HAP-1 (cell line): ENCODE measurements at regions of chr5 and their contacts with region 1.

Region 1: GRCh38 chr5:98905857-98906690 is 22.7 kb downstream of the CHD1 start:
- DNase-seq: peak in 1 of 2 experiments; percentile 47
- H3K4me3 ChIP-seq: no peak overlapping the region
- H3K4me1 ChIP-seq: peaks cover 23% of the 10 kb centered on the region
- H3K27me3 ChIP-seq: no peaks in the 10 kb centered on the region

Region 2: DNA sequence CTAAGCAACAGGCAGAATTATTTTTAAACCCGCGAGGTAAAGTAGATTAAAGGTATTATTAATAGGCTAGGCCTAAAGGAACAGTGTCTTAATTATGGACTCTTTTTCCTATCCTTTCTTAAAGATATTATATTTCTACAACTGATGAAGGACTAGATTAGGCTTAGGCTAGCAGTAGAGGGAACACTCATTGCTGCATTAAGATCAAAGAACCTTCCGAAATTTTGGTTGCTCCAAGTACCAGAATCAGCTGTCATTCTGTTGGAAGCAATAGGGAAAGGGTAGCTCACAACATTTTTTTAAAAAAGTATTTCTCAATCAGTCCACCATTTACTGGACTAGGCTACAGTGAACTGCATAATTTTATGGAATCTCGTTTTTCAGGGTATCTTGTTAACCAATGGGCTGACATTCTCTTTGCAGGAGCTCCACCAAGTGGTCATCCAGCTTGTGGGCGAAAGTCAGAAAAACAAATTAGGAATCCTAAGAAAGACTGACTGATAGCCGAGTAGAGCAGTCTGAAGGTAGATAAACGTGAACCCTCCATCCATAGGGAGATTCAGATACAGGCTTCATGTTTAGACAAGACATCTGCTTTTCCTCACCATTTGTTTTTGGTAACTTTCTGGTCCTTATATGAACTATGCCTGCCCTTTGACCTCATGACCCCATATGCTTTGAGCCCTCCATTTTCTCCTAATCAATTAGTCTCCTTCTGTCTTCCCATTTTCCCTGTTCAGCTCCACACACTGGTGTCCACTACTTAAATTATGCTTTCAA is 126.3 kb after region 1 on chr5:
- in situ Hi-C with region 1: loop called (anchors 5 kb)
- DNase-seq: peak; percentile 65 to 70
- H3K4me3 ChIP-seq: no peak overlapping the region
- H3K4me1 ChIP-seq: peaks cover 8% of the 10 kb centered on the region
- H3K27me3 ChIP-seq: no peaks in the 10 kb centered on the region

Region 3: DNA sequence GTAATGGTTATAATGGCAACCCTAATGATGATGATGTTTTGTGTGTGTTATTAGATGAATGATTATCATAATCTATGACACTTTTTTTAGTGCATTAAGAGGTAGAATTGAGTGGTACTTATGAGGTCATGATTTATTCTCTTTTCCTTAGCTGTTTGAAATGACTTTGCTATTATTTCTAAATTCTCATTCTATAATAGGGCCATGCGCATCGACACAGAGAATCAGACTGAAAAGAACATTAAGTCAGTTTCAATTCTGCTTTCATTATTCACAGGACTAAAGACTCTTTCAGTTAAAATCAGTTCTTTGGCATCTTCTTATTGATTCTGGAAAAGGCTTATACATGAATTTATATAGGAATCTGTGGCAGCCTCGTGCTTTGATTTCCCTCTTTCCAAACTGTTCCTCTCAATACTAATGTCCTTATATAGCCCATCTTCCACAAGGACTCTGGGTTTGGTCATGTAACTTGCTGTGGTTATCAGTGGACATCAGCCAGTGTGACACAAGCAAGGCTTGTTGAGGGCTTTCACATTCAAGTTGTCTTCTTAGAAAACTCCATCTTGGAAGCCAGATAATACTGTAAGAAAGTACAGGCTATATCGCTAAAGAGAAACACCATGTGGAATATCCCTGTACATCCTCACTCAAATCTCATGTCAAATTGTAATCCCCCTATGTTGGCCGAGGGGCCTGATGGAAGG is 163.0 kb after region 1 on chr5:
- in situ Hi-C with region 1: no loop called
- DNase-seq: no peak
- H3K4me3 ChIP-seq: no peak overlapping the region
- H3K4me1 ChIP-seq: peaks cover 19% of the 10 kb centered on the region
- H3K27me3 ChIP-seq: no peaks in the 10 kb centered on the region